Right ventricle myocardium superior (tissue), 1 donor: ENCODE measurements at regions of chr12 and their contacts with region 1.

Region 1: DNA sequence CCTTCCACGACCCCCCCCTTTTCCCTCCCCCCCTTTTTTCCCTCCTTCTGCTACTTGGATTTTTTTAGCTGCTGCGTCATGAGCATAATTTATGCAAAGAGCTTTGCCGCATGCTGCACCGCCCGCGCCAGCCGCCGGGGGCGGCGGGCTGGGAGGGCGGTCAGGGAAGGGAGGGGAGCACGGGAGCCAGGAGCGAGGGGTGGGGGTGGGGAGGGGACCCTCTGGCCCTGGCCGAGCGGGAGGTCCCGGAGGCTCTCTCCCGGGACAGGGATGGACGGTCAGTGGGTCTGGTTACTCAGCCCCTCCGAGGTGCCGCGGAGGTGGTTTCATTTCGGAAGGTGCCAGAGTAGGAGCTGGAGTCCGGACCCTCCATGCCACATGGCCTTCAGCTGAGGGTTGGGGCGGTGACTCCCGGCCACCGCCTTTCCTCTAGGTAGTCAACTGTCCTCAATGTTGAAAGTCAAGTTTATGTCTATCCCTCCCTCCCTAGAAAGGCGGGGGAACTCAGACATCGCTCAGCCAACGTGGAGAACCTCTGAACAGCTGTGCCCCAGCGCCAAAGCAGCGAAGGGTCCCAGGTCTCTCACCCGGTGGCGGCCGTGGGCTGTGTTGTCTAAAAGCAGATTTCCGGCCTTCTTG is at the start of gene POU6F1:
- DNase-seq: peak; percentile 78
- ATAC-seq: peak; percentile 95
- total RNA-seq, gene POU6F1: 10.0 TPM

Region 2: DNA sequence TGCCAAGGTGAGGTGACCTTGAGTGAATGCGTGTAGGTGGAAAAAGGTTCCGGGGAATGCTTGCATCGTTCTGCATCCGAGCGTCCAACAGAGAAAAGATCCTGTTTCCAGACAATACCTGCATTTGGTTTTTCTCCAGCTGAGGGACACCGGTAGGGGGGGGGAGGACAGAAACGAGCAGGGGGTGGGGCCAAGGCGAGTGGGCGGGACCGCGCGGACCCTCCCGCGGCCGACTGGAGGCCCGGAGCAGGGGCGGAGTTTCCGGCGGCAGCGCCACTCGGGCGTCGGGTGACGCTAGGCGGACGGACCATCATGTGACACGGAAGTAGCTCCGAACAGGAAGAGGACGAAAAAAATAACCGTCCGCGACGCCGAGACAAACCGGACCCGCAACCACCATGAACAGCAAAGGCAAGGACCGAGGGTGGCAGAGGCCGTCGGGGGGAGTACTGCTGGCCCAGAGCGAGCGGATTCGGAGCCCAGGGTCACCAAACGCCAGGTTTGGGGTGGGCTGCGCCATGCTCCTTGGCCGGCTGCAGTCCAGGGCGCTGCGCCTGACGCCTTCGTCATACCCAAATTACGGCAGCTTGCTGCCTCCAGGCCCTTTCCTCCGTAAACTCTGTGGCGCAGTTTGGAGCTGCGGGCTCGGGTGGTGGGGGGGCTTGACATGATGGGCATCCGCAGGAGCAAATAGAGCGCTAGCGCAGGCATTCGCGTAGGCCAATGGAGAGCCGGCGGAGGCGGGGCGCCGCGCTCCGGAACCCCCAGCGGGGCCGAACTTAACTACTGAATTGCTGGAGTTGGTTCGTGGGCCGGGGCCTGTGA is 20.6 kb after region 1 on chr12 and contains the start of gene DAZAP2:
- intact Hi-C with region 1: loop called (anchors 2 kb)
- DNase-seq: peak; percentile 98
- ATAC-seq: peak; percentile 99
- total RNA-seq, gene DAZAP2: 124 TPM